Heart left ventricle (tissue), 16 donors: ENCODE measurements at regions of chr12 and their contacts with region 1.

Region 1: DNA sequence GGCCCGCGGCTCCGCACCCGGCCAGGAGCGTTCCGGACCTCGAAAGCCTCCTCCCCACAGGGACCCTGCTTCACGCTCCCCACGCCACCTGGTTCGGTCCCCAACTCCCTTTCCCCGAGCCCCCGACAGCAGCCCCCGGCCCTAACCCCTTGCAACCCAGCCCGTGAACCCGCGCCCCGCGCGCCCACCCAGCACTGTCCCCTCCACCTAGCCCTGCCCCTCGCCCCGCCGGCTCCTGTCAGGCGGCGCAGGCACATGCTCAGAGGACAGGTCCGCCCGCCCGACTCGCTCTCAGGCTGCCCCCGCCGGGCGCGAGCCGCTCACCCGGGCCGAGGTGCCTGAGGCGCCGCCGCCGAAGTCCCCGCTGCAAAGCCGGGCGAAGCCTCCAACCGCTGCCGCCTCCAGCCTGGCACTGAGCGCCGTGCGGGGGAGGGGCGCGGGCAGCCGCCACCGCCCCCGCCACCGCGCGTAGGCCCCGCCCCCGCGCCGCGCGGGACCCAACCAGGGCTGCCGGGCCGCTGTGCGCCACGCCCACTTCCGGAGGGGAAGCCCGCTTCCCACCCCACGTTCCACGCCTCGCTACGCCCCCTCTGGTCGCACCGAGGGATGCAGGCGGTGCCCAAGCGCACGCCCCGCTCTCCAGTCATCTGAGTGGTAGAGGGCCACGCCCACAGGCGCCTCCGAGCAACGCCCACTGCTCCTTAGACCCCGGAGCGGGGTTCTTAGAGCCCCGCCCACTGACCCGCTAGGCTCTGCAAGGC is at the start of gene CORO1C:
- DNase-seq: peak; percentile 98 to 99 (median 98)
- ATAC-seq: peak; percentile 76 to 88 (median 86)
- H3K4me3 ChIP-seq: peak within 1 kb of the TSS; percentile 73 to 91 (median 86)
- H3K27ac ChIP-seq: peak within 1 kb of the TSS; percentile 91 to 99 (median 96)
- H3K4me1 ChIP-seq: peaks cover 0 to 58% (median 28%) of the 10 kb centered on the region in 12 donors
- H3K27me3 ChIP-seq: no peaks in the 10 kb centered on the region
- CTCF ChIP-seq: peak; percentile 78 to 97 (median 90)
- POLR2A ChIP-seq: peak; percentile 82 to 91
- total RNA-seq, gene CORO1C: 48.3 to 119 (median 68.5) TPM

Region 2: DNA sequence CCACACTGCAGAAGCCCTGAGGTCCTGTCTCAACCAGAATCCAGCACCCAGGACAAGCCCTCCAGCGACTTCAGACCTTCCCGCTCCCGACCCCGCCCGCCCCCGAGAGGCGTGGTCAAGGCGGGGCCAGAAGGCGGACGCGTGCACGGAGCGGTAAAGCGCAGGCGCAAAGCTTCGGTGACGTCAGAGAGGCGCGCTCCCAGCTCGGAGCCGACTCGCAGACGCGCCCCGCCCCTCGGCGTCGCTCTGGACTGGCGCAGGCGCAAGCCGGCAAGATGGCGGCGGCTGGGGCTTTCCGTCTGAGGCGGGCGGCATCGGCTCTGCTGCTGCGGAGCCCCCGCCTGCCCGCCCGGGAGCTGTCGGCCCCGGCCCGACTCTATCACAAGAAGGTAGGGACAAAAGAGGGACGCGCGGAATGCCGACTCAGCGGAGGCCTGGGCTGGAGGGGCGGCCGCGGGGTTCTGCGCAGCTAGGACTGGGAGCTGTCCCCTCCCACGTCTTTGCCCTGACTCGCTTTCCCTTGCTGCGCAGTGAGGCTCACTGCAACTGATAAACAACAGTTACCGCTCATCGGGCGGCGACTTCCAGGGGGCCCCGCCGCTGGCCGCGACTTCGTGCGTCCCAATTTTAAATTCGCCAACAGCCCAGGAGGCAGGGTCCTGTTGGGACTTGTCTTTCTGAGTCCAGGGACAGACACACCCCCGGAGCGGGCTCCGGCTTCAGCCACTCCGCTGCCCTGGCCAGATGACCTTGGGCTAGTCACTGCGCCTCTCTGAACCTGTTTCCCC is 168.7 kb before region 1 on chr12 and contains the start of gene ISCU:
- intact Hi-C with region 1: loop called in 2 of 10 experiments (anchors 5 kb)
- DNase-seq: peak; percentile 97 to 100 (median 98)
- ATAC-seq: peak; percentile 84 to 90 (median 88)
- H3K4me3 ChIP-seq: peak within 1 kb of the TSS; percentile 67 to 100 (median 89)
- H3K27ac ChIP-seq: peak within 1 kb of the TSS; percentile 84 to 98 (median 95)
- H3K4me1 ChIP-seq: peaks cover 7 to 81% (median 56%) of the 10 kb centered on the region in 12 donors
- H3K27me3 ChIP-seq: no peaks in the 10 kb centered on the region
- CTCF ChIP-seq: no peak
- POLR2A ChIP-seq: peak; percentile 86 to 98
- total RNA-seq, gene ISCU: 289 to 632 (median 497) TPM

Region 3: GRCh38 chr12:108691175-108691997 is 39.9 kb before region 1 on chr12:
- intact Hi-C with region 1: loop called (anchors 1 to 5 kb)
- DNase-seq: peak; percentile 94 to 98 (median 95)
- ATAC-seq: peak; percentile 91 to 97 (median 94)
- H3K4me3 ChIP-seq: peak overlapping the region in 9 of 12 donors; percentile 13 to 39 (median 30)
- H3K27ac ChIP-seq: peak overlapping the region; percentile 84 to 96 (median 94)
- H3K4me1 ChIP-seq: peaks cover 18 to 95% (median 72%) of the 10 kb centered on the region in 12 donors
- H3K27me3 ChIP-seq: no peaks in the 10 kb centered on the region
- CTCF ChIP-seq: peak in 11 of 12 donors; percentile 7 to 55 (median 37)
- POLR2A ChIP-seq: no peak

Region 4: GRCh38 chr12:108768591-108769500 is 37.6 kb after region 1 on chr12:
- intact Hi-C with region 1: loop called in 8 of 10 experiments (anchors 5 kb)
- DNase-seq: peak in 4 of 5 donors; percentile 39 to 74 (median 66)
- ATAC-seq: peak in 3 of 4 donors; percentile 25 to 49 (median 37)
- H3K4me3 ChIP-seq: peak overlapping the region in 11 of 12 donors; percentile 21 to 52 (median 41)
- H3K27ac ChIP-seq: peak overlapping the region in 4 of 12 donors; percentile 0 to 66 (median 34)
- H3K4me1 ChIP-seq: peaks cover 3 to 45% (median 24%) of the 10 kb centered on the region in 12 donors
- H3K27me3 ChIP-seq: no peaks in the 10 kb centered on the region
- CTCF ChIP-seq: peak in 2 of 12 donors; percentile 7 to 9
- POLR2A ChIP-seq: no peak

Region 5: DNA sequence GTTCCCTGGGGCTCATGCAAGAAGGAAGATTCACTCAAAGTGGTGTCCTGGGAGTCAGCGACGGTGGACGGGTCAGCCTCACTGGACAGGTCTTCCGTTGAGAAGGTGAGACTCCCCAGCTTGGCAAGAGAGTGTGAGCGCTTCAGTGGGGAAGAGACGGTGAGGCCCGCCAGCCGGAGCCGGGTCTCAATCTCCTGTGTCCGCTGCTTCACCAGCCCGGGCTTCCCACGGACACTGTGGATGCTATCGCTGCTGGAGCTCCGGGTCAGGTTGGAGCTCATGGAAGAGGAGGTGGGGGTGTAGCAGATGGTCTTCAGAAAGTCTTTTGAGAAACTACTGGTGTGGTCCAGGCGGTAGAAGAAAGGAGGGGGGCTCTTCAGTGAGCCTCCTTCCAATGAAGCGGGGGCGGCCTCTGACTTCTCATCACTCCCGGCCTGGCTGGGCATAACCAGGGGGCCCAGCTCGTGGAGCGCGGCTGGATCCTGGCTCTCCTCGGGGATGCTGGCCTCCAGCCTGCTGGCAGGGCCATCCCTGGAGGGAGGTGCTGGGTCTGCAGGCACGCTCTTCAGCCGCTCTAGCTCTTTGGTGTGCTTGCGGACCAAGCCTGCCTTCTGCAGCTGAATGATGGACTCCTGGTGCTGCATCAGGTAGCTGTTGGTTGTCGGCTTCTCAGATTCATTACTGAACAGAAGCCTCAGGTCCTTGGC is 56.9 kb after region 1 on chr12:
- intact Hi-C with region 1: loop called in 4 of 10 experiments (anchors 5 kb)
- DNase-seq: peak; percentile 63 to 81 (median 73)
- ATAC-seq: peak; percentile 59 to 80 (median 71)
- H3K4me3 ChIP-seq: no peak overlapping the region
- H3K27ac ChIP-seq: peak overlapping the region in 11 of 12 donors; percentile 10 to 81 (median 44)
- H3K4me1 ChIP-seq: peaks cover 7 to 76% (median 50%) of the 10 kb centered on the region in 12 donors
- H3K27me3 ChIP-seq: no peaks in the 10 kb centered on the region
- CTCF ChIP-seq: no peak
- POLR2A ChIP-seq: no peak

Region 6: GRCh38 chr12:108850854-108851573 is 119.7 kb after region 1 on chr12:
- intact Hi-C with region 1: loop called in 5 of 10 experiments (anchors 5 to 10 kb)
- DNase-seq: peak; percentile 77 to 88 (median 85)
- ATAC-seq: peak in 3 of 4 donors; percentile 45 to 67 (median 54)
- H3K4me3 ChIP-seq: peak overlapping the region in 3 of 12 donors; percentile 23 to 38 (median 37)
- H3K27ac ChIP-seq: peak overlapping the region in 11 of 12 donors; percentile 46 to 99 (median 96)
- H3K4me1 ChIP-seq: peaks cover 17 to 98% (median 85%) of the 10 kb centered on the region in 12 donors
- H3K27me3 ChIP-seq: no peaks in the 10 kb centered on the region
- CTCF ChIP-seq: peak in 5 of 12 donors; percentile 15 to 45 (median 24)
- POLR2A ChIP-seq: peak in 1 of 2 donors; percentile 17